ENCODE measurements at regions of chr20 and their contacts with region 1.

Region 1: GRCh38 chr20:487655-488054 is 25.3 kb upstream of the TBC1D20 start:
- DNase-seq: no peak
- ATAC-seq: no peak
- H3K4me3 ChIP-seq: no peak overlapping the region
- H3K27ac ChIP-seq: no peak overlapping the region
- H3K4me1 ChIP-seq: no peaks in the 10 kb centered on the region; a peak in 1 of 5 replicates
- H3K27me3 ChIP-seq: no peaks in the 10 kb centered on the region
- CTCF ChIP-seq: no peak
- EP300 ChIP-seq: no peak
- POLR2A ChIP-seq: no peak
- RAD21 ChIP-seq: no peak

Region 2: GRCh38 chr20:740141-740540 is 252.5 kb after region 1 on chr20:
- CTCF ChIA-PET with region 1: no interaction called
- POLR2A ChIA-PET with region 1: no interaction called
- in situ Hi-C with region 1: no loop called
- intact Hi-C with region 1: loop called (anchors 5 kb)
- DNase-seq: no peak
- ATAC-seq: no peak
- H3K4me3 ChIP-seq: no peak overlapping the region
- H3K27ac ChIP-seq: no peak overlapping the region
- H3K4me1 ChIP-seq: peaks cover 0 to 7% of the 10 kb centered on the region in 2 experiments; a peak in 2 of 5 replicates
- H3K27me3 ChIP-seq: no peaks in the 10 kb centered on the region
- CTCF ChIP-seq: no peak
- EP300 ChIP-seq: no peak
- POLR2A ChIP-seq: no peak
- RAD21 ChIP-seq: no peak

Measured in K562 (cell line).